ENCODE measurements at regions of chr12 and their contacts with region 1.

Region 1: GRCh38 chr12:1795785-1796514 is 24.4 kb upstream of the LRTM2 start:
- DNase-seq: peak; percentile 92 to 98 (median 96)
- ATAC-seq: peak; percentile 92 to 96 (median 94)
- H3K4me3 ChIP-seq: peak overlapping the region; percentile 47 to 79 (median 64)
- H3K27ac ChIP-seq: peak overlapping the region; percentile 49 to 95 (median 84)
- H3K4me1 ChIP-seq: peaks cover 8 to 46% (median 26%) of the 10 kb centered on the region in 12 donors
- H3K27me3 ChIP-seq: no peaks in the 10 kb centered on the region
- CTCF ChIP-seq: peak; percentile 92 to 100 (median 99)
- POLR2A ChIP-seq: peak in 1 of 2 donors; percentile 70

Region 2: DNA sequence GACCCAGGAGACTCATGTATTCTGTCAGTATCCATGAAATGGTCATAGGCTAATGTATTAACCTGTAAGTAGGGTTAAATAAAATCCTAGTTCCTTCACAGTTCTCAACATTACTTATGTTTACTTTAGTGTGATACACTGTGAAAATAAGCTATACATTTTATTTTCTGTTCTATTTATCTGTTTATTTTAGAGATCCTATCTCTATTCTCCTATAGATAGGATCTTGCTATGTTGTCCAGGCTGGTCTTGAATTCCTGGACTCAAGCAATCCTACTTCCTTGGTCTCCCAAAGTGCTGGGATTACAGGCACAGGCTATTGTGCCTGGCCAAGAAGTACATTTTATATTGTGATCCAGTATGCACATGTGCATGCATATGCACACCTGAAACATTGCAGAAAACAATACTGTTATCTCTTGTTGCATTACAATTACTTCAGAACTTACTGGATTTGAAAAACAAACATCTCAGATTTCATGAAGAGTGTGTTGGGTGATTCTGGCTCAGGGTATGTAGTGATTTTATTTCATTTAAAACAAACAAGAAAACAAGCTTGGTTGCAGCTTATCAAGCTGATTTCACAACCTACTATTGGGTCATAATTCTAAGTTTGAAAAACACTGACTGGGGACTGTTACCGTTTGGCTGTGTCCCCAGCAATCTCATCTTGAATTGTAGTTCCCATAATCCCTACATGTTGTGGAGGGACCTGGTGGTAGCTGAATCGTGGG is 773.9 kb before region 1 on chr12:
- intact Hi-C with region 1: no loop called
- DNase-seq: no peak
- ATAC-seq: no peak
- H3K4me3 ChIP-seq: no peak overlapping the region
- H3K27ac ChIP-seq: no peak overlapping the region
- H3K4me1 ChIP-seq: peaks cover 0 to 27% (median 7%) of the 10 kb centered on the region in 12 donors
- H3K27me3 ChIP-seq: no peaks in the 10 kb centered on the region
- CTCF ChIP-seq: no peak
- POLR2A ChIP-seq: no peak

Region 3: DNA sequence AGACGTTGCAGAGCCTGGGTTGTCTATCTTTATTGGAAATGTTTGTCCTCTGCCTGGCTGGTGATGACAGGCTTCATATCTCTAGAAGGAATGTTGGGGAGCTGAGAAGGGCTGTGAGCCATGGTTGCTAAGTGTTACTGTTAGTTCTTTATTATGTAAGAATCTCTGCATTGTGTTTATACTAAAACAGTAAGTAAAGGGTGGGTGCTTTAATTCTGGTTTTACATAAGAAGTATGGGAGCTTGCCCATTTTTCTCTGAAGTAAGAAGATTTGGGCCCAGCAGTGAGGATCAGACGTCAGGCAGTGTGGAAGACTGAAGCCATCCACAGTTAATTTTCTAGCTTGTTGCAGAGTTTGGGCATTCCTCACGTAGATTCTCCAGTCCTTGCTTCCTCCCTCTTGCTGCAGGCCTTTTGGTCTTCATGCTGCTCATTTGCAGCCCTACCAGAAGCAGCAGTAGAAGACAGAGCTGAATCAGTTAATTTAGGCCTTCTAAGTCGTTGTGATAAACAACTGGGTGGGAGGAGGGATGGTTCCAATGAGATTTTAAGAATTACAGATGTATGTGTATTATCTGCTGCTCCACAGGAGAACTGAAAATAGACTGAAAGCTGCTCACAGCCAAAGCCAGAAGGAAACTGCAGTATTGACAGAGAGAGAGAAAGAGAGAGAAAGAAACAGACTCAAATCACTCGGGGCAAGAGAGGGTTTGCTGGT is 145.5 kb before region 1 on chr12:
- intact Hi-C with region 1: loop called (anchors 1 to 2 kb)
- DNase-seq: peak in 1 of 5 donors; percentile 37
- ATAC-seq: peak; percentile 76 to 84 (median 80)
- H3K4me3 ChIP-seq: peak overlapping the region in 2 of 12 donors; percentile 3 to 13
- H3K27ac ChIP-seq: peak overlapping the region in 11 of 12 donors; percentile 6 to 80 (median 61)
- H3K4me1 ChIP-seq: peaks cover 0 to 37% (median 21%) of the 10 kb centered on the region in 12 donors
- H3K27me3 ChIP-seq: no peaks in the 10 kb centered on the region
- CTCF ChIP-seq: no peak
- POLR2A ChIP-seq: no peak

Region 4: DNA sequence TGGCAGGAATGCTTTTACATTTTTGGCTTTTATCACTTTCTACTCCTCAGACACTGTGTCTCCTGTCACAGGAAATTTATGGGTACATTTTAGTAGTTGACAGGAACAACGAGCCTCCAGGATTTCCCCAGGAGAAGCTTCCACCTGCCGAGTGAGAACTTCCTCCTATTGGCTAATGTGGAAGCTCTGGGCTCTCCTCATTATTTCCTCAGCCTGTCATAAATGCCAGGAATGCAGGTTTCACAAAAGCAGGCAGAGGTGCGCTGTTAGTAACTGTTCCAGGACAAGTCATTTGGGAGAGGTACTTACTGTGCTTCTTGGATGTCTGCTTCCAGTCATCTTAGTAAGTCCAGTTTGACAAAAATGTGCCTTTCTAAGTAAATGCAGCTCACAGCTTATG is 227.4 kb after region 1 on chr12:
- intact Hi-C with region 1: loop called in 2 of 10 experiments (anchors 5 to 10 kb)
- DNase-seq: no peak
- ATAC-seq: no peak
- H3K4me3 ChIP-seq: no peak overlapping the region
- H3K27ac ChIP-seq: peak overlapping the region in 1 of 12 donors; percentile 3
- H3K4me1 ChIP-seq: peaks cover 0 to 63% (median 18%) of the 10 kb centered on the region in 12 donors
- H3K27me3 ChIP-seq: no peaks in the 10 kb centered on the region
- CTCF ChIP-seq: no peak
- POLR2A ChIP-seq: no peak

Region 5: DNA sequence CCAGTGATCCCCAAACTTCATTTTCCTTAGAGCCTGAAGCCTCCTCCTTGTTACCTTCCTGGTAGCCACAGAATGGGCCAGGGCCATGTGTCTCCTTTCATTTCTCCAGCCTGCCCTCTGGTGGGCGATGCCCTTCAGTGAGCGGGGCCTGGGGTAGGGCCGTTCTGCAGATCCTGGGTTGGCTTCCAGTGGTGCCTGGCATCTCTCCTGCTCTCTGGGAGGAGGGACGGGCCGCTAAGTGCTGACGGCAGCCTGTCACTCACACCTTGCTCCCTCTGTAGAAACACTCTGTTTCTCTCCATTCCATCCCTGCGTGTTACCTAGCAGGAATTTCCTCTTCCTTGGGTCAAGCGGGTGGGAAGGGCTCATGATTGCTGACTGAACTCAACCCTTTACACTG is 488.9 kb after region 1 on chr12:
- intact Hi-C with region 1: loop called in 1 of 10 experiments (anchors 5 kb)
- DNase-seq: peak; percentile 79 to 92 (median 89)
- ATAC-seq: peak; percentile 77 to 87 (median 82)
- H3K4me3 ChIP-seq: no peak overlapping the region
- H3K27ac ChIP-seq: peak overlapping the region in 10 of 12 donors; percentile 58 to 82 (median 76)
- H3K4me1 ChIP-seq: peaks cover 4 to 88% (median 79%) of the 10 kb centered on the region in 12 donors
- H3K27me3 ChIP-seq: no peaks in the 10 kb centered on the region
- CTCF ChIP-seq: peak; percentile 45 to 77 (median 64)
- POLR2A ChIP-seq: no peak

Region 6: GRCh38 chr12:2783936-2784600 is 988.1 kb after region 1 on chr12:
- intact Hi-C with region 1: loop called in 1 of 10 experiments (anchors 10 kb)
- DNase-seq: peak; percentile 69 to 84 (median 78)
- ATAC-seq: peak; percentile 84 to 95 (median 95)
- H3K4me3 ChIP-seq: peak overlapping the region in 9 of 12 donors; percentile 13 to 35 (median 27)
- H3K27ac ChIP-seq: no peak overlapping the region
- H3K4me1 ChIP-seq: peaks cover 0 to 10% (median 4%) of the 10 kb centered on the region in 12 donors
- H3K27me3 ChIP-seq: peaks cover 0 to 6% (median 0%) of the 10 kb centered on the region in 9 donors
- CTCF ChIP-seq: peak; percentile 83 to 96 (median 90)
- POLR2A ChIP-seq: no peak

Measured in heart left ventricle (tissue), 16 donors.